ENCODE measurements at regions of chr14 and their contacts with region 1.

Region 1: DNA sequence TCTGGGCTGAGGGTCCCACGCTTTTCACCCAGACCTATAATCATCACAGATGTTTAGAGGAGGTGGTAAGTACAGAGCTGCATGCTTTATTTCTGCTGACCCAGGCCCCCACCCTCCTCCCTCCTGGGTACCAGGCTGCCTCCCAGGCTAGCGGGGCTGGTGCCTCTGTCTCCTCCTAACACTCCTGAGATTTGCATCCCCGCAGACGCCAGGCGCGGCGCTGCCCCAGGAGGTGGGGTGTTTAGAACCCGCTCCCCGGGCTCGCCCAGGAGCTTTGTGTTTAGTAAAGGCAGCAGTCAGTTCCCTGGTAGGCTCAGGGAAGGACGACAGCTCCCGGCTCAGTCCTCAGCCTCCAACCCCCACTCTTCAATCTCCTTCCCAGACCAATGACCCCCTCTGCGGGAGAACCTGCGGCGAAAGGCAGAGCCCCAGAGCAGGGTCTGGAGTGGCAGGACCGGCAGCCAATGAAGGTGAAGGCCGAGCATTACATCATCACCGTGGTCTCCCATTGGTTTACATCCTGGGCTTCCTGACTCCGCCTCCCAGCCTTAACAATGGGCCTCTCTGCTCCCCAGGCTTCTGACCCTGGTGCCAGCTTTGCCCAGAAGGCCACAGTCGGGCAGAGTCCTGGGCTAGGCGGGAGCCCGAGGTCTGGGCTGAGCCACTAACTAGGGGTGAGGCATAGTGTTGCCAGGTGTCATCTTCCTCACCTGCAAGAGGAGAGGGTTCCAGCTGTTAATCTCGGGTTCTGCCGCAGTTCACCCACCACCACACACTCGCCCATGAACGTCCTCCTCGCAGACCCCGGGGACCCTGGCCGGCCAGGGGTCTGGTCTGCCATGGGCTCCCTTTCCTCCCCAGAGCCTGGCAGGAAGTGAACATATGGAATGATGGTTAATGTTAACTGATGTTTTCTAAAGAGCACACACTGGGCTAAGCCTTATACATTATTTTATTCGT is 57.5 kb downstream of the CALM1 start:
- DNase-seq: peak; percentile 13
- H3K4me3 ChIP-seq: peak overlapping the region; percentile 24
- CTCF ChIP-seq: no peak

Region 2: GRCh38 chr14:90599748-90600507 is 145.6 kb after region 1 on chr14:
- in situ Hi-C with region 1: loop called (anchors 10 kb)
- DNase-seq: no peak
- H3K4me3 ChIP-seq: no peak overlapping the region
- CTCF ChIP-seq: peak; percentile 13

Measured in astrocyte of the cerebellum (primary cell).